ENCODE measurements at regions of chr3 and their contacts with region 1.

Region 1: DNA sequence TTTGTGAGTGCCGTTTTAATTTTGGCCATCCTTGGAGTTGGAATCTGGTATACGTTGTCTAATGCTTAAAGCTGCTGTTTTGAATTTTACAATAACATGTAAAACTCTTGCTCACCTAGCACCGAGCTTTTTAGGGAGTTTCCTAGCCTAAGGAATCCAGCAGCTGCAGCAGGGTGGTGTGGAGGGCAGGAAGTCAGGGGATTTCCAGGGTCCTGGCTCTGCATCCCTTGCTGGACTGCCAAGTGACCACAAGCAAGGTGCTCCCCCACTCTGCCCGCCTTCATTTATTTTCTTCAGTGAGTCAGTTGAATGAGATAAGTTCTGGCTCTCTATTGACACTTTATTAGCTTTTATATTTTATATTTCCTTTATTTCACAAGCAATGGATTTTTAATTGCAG is 113.7 kb downstream of the ATG7 start:
- DNase-seq: no peak
- ATAC-seq: no peak

Region 2: GRCh38 chr3:11530153-11530721 is 144.3 kb after region 1 on chr3:
- intact Hi-C with region 1: loop called (anchors 10 kb)
- DNase-seq: peak; percentile 79
- ATAC-seq: peak; percentile 76